ENCODE measurements at regions of chr1 and their contacts with region 1.

Region 1: GRCh38 chr1:37807555-37808368 is at the starts of genes C1orf122 and YRDC:
- DNase-seq: peak; percentile 96
- H3K4me3 ChIP-seq: peak within 1 kb of the TSS; percentile 88
- H3K27ac ChIP-seq: peak within 1 kb of the TSS; percentile 93
- H3K4me1 ChIP-seq: peaks cover 12% of the 10 kb centered on the region
- H3K27me3 ChIP-seq: no peaks in the 10 kb centered on the region
- CTCF ChIP-seq: no peak
- total RNA-seq, gene C1orf122: 28.3 to 51.4 TPM
- total RNA-seq, gene YRDC: 14.4 to 16.3 TPM

Region 2: GRCh38 chr1:37692078-37692833 is 115.5 kb before region 1 on chr1 and contains the start of gene CDCA8:
- intact Hi-C with region 1: loop called (anchors 5 kb)
- DNase-seq: peak; percentile 99
- H3K4me3 ChIP-seq: peak within 1 kb of the TSS; percentile 91
- H3K27ac ChIP-seq: peak within 1 kb of the TSS; percentile 63
- H3K4me1 ChIP-seq: peaks cover 25% of the 10 kb centered on the region
- H3K27me3 ChIP-seq: no peaks in the 10 kb centered on the region
- CTCF ChIP-seq: peak; percentile 54
- total RNA-seq, gene CDCA8: 14.9 to 44.5 TPM

Region 3: GRCh38 chr1:37739222-37739621 is 68.5 kb before region 1 on chr1:
- intact Hi-C with region 1: loop called (anchors 10 kb)
- DNase-seq: peak; percentile 69
- H3K4me3 ChIP-seq: no peak overlapping the region
- H3K27ac ChIP-seq: peak overlapping the region; percentile 50
- H3K4me1 ChIP-seq: peaks cover 4% of the 10 kb centered on the region
- H3K27me3 ChIP-seq: no peaks in the 10 kb centered on the region
- CTCF ChIP-seq: no peak

Region 4: DNA sequence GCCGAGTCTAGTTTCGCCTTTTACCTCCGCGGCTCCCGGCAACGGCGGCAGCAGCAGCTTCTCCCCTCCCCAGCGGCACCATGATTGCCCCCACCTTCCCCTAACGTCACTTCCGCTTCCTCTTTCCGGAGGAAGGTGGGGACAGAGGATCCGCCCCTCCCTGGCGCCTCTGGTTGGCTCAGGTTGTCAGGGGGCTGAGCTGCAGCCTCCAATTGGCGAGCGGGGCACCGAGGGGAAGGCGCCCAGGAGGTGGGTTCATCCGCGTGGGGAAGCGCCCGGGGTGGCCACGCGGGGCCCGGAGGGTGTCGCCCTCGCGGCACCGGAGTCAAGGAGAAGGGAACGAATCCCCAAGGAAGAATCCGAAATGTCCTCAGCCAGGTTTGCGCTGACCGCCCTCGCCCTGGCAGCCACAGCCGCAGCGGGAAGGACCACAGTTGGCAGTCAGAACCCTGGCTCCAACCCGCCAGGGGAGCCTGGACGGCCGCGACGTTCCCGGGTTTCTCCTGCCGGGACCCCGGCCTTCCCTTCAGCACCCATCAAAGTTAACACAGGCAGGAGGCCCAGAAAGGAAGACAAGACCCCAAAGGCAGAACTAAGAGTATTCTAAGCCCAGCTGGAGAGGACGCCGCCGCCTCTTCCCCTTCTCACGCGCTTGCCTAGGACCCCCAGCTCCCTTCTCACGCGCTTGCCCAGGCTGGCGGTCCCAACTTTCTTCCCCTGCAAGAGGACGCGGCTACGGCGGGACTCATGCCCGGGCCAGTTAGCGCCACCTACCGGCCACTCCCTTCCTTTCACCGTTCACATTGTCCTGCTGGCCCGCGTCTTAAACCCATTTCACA is 52.0 kb after region 1 on chr1 and contains the start of gene MTF1:
- intact Hi-C with region 1: loop called (anchors 5 kb)
- DNase-seq: peak; percentile 98
- H3K4me3 ChIP-seq: peak within 1 kb of the TSS; percentile 85
- H3K27ac ChIP-seq: peak within 1 kb of the TSS; percentile 84
- H3K4me1 ChIP-seq: no peaks in the 10 kb centered on the region
- H3K27me3 ChIP-seq: no peaks in the 10 kb centered on the region
- CTCF ChIP-seq: peak; percentile 91
- total RNA-seq, gene MTF1: 22.1 to 33.9 TPM

Measured in colonic mucosa (tissue), 4 donors.